B cell (primary cell): ENCODE measurements at regions of chr15 and their contacts with region 1.

Region 1: DNA sequence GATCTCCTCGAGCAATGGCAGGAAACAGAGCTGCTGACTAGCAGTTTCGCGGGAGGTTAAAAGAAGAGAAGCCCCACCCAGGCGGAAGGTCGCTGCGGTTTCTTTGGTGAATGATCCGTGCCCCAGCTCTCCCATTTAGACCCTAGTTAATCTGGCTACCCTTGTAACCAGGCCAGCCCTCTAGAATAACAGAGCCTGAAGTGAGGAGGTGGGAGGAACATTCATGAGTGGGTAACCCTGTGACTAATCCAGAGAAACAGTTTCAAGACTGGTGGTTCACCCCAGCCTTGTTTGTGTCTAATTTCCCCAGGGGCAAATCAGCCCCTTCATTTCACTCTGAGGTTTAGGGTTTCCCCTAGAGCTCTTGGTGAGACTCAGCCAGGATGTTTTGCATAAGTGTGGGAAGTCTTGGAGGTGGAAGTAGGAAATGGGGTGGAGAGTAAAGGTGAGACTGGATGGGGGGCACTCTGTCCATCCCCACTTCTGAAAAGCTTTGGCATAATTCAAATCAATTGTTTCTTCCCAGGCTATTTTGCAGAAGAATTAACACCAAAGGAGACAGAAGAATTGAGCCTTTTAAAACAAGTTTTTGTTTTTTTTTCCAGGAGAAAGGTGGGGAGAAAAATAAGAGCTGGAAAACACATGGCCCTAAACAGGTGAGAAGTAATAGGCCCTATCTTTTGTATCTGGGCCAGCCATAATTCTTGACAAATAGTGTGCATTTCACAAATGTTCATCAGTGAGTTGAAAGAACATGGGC is 303.1 kb downstream of the RPLP1 start:
- DNase-seq: peak; percentile 84
- ATAC-seq: peak; percentile 85
- H3K4me3 ChIP-seq: peak overlapping the region in 2 of 5 experiments; percentile 8 to 23
- H3K4me3 Mint-ChIP-seq: peak overlapping the region; percentile 84
- H3K27ac ChIP-seq: peak overlapping the region; percentile 22 to 73
- H3K27ac Mint-ChIP-seq: peak overlapping the region; percentile 91
- H3K4me1 ChIP-seq: peaks cover 69 to 72% of the 10 kb centered on the region in 2 donors
- H3K4me1 Mint-ChIP-seq: peaks cover 79% of the 10 kb centered on the region
- H3K27me3 ChIP-seq: no peaks in the 10 kb centered on the region
- H3K27me3 Mint-ChIP-seq: no peaks in the 10 kb centered on the region
- CTCF ChIP-seq: no peak

Region 2: GRCh38 chr15:69666411-69666882 is 89.3 kb before region 1 on chr15:
- CTCF ChIA-PET with region 1: no interaction called
- POLR2A ChIA-PET with region 1: no interaction called
- intact Hi-C with region 1: loop called (anchors 5 kb)
- DNase-seq: peak; percentile 67
- ATAC-seq: peak; percentile 37
- H3K4me3 ChIP-seq: peak overlapping the region in 3 of 5 experiments; percentile 22 to 48 (median 30)
- H3K4me3 Mint-ChIP-seq: peak overlapping the region; percentile 79
- H3K27ac ChIP-seq: peak overlapping the region in 1 of 2 donors; percentile 54
- H3K27ac Mint-ChIP-seq: peak overlapping the region; percentile 80
- H3K4me1 ChIP-seq: peaks cover 44 to 55% of the 10 kb centered on the region in 2 donors
- H3K4me1 Mint-ChIP-seq: peaks cover 49% of the 10 kb centered on the region
- H3K27me3 ChIP-seq: peaks cover 0 to 7% (median 2%) of the 10 kb centered on the region in 4 experiments
- H3K27me3 Mint-ChIP-seq: peaks cover 8% of the 10 kb centered on the region
- CTCF ChIP-seq: no peak

Region 3: GRCh38 chr15:69679623-69680228 is 76.0 kb before region 1 on chr15:
- CTCF ChIA-PET with region 1: no interaction called
- POLR2A ChIA-PET with region 1: no interaction called
- intact Hi-C with region 1: no loop called
- DNase-seq: peak; percentile 27
- ATAC-seq: peak; percentile 89
- H3K4me3 ChIP-seq: no peak overlapping the region
- H3K4me3 Mint-ChIP-seq: peak overlapping the region; percentile 48
- H3K27ac ChIP-seq: no peak overlapping the region
- H3K27ac Mint-ChIP-seq: peak overlapping the region; percentile 81
- H3K4me1 ChIP-seq: peaks cover 4 to 19% of the 10 kb centered on the region in 2 donors
- H3K4me1 Mint-ChIP-seq: peaks cover 16% of the 10 kb centered on the region
- H3K27me3 ChIP-seq: peaks cover 0 to 10% (median 4%) of the 10 kb centered on the region in 4 experiments
- H3K27me3 Mint-ChIP-seq: peaks cover 32% of the 10 kb centered on the region
- CTCF ChIP-seq: no peak

Region 4: DNA sequence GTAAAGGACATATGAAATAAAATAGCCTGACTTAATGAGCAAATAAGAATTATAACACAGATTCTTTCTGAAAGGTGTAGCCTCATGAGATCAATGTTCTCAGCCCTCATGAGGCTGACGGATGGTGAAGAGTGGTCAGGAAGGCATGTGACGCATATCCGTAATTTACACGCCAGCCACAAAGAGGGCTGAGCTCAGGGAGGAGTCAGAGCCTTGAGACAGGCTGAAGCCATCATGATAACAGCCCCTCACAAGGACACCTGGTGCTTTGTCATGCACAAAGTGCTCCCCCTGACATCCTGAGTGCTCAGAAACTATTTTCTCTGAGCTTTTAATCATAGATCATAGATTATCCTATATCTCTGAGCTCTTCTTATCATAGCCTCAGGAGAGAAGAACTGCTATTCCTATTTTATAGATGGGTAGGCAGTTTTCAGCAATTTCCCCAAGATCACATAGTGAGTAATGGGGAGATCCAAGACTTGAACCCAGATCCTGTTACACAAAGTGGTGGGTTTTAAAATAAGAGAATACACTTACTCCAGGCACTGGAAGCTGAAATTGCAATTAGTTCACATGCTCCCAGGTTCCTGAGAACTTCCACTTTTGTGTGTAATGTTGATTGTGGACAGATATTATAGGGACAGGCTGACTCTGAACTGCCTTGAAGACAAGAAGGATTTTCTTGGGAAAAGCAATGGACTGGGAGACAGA is 36.0 kb before region 1 on chr15:
- CTCF ChIA-PET with region 1: interaction called, 4 read pairs
- POLR2A ChIA-PET with region 1: interaction called, 5 read pairs
- intact Hi-C with region 1: loop called (anchors 5 kb)
- DNase-seq: peak; percentile 81
- ATAC-seq: peak; percentile 86
- H3K4me3 ChIP-seq: no peak overlapping the region
- H3K4me3 Mint-ChIP-seq: peak overlapping the region; percentile 36
- H3K27ac ChIP-seq: peak overlapping the region; percentile 21 to 62
- H3K27ac Mint-ChIP-seq: peak overlapping the region; percentile 76
- H3K4me1 ChIP-seq: peaks cover 33 to 60% of the 10 kb centered on the region in 2 donors
- H3K4me1 Mint-ChIP-seq: peaks cover 53% of the 10 kb centered on the region
- H3K27me3 ChIP-seq: peaks cover 0 to 15% (median 4%) of the 10 kb centered on the region in 4 experiments
- H3K27me3 Mint-ChIP-seq: peaks cover 12% of the 10 kb centered on the region
- CTCF ChIP-seq: no peak

Region 5: GRCh38 chr15:69743091-69743490 is 12.6 kb before region 1 on chr15:
- CTCF ChIA-PET with region 1: interaction called, 16 read pairs
- POLR2A ChIA-PET with region 1: no interaction called
- intact Hi-C with region 1: no loop called
- DNase-seq: no peak
- ATAC-seq: no peak
- H3K4me3 ChIP-seq: no peak overlapping the region
- H3K4me3 Mint-ChIP-seq: no peak overlapping the region
- H3K27ac ChIP-seq: no peak overlapping the region
- H3K27ac Mint-ChIP-seq: no peak overlapping the region
- H3K4me1 ChIP-seq: peaks cover 9 to 14% of the 10 kb centered on the region in 2 donors
- H3K4me1 Mint-ChIP-seq: peaks cover 16% of the 10 kb centered on the region
- H3K27me3 ChIP-seq: peaks cover 0 to 11% (median 3%) of the 10 kb centered on the region in 4 experiments
- H3K27me3 Mint-ChIP-seq: peaks cover 31% of the 10 kb centered on the region
- CTCF ChIP-seq: no peak

Region 6: GRCh38 chr15:70014860-70015490 is 259.2 kb after region 1 on chr15:
- CTCF ChIA-PET with region 1: no interaction called
- POLR2A ChIA-PET with region 1: no interaction called
- intact Hi-C with region 1: loop called (anchors 10 kb)
- DNase-seq: peak; percentile 72
- ATAC-seq: peak; percentile 76
- H3K4me3 ChIP-seq: peak overlapping the region in 1 of 5 experiments; percentile 37
- H3K4me3 Mint-ChIP-seq: peak overlapping the region; percentile 76
- H3K27ac ChIP-seq: peak overlapping the region; percentile 81 to 84
- H3K27ac Mint-ChIP-seq: peak overlapping the region; percentile 97
- H3K4me1 ChIP-seq: peaks cover 69 to 77% of the 10 kb centered on the region in 2 donors
- H3K4me1 Mint-ChIP-seq: peaks cover 79% of the 10 kb centered on the region
- H3K27me3 ChIP-seq: no peaks in the 10 kb centered on the region
- H3K27me3 Mint-ChIP-seq: no peaks in the 10 kb centered on the region
- CTCF ChIP-seq: no peak